Common myeloid progenitor, CD34-positive (primary cell): ENCODE measurements at regions of chr21 and their contacts with region 1.

Region 1: DNA sequence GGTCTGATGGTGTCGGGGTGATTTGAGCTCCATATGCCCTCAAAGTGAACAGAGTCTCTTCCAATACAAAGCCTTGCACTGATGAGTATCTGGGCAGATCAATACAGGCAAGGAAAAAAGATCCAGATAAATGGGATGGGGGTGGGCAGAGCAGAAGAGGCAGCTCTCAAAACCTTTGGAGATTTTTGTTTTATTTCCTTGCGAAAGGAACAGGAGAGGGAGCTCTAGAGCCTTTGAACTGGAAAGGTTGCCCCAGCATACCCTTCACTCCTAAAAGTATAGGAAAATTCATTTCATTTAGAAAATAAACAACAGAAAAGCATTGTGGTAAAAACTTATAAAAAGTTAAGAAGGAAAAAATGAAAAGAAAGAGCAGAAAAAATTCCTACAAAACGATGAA is 31.4 kb upstream of the OLIG2 start:
- DNase-seq: peak; percentile 17 to 43 (median 28)
- H3K4me3 ChIP-seq: no peak overlapping the region
- H3K27ac ChIP-seq: no peak overlapping the region
- H3K4me1 ChIP-seq: no peaks in the 10 kb centered on the region
- H3K27me3 ChIP-seq: peaks cover 0 to 22% (median 6%) of the 10 kb centered on the region in 5 experiments

Region 2: DNA sequence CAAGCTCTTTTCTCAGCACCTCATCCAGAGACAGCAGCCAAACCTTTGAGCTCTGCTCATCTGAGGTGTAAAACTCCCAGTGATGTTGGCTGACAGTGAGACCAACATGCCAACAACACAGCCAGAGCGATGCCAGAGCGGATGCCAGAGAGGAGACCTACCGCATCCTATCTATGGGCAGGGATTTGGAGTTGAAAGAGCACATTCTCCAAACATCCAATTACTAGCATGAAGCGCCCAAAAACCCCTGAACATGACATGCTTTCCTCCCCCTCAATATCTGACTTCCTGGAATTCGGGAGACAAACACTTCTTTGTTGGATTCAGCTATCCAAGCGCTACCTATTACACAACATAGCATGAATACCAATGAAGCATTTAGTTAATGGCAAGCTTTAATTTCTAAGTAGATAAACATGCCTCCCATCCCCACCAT is 199.6 kb before region 1 on chr21:
- CTCF ChIA-PET with region 1: no interaction called
- POLR2A ChIA-PET with region 1: no interaction called
- DNase-seq: no peak
- H3K4me3 ChIP-seq: no peak overlapping the region
- H3K27ac ChIP-seq: no peak overlapping the region
- H3K4me1 ChIP-seq: peaks cover 0 to 4% (median 0%) of the 10 kb centered on the region in 4 experiments
- H3K27me3 ChIP-seq: no peaks in the 10 kb centered on the region

Region 3: DNA sequence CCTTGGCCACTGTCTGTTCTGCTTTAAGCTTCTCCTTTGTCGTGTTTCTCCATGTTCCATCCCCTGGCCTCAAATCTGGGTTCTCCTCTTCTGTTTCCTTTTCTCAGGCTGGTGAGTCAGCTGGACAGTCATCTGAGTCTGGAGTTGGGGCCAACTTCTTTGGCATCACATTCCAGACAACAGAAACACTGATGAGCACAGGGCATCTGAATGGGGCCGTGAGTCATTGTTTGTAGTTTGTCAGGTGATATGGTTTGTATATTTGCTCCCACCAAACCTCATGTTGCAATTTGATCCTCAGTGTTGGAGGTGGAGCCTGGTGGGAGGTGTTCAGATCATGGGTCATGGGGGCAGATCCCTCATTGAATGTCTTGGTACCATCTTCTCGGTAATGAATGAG is 17.2 kb after region 1 on chr21:
- CTCF ChIA-PET with region 1: interaction called, 10 read pairs
- POLR2A ChIA-PET with region 1: no interaction called
- DNase-seq: no peak
- H3K4me3 ChIP-seq: no peak overlapping the region
- H3K27ac ChIP-seq: no peak overlapping the region
- H3K4me1 ChIP-seq: no peaks in the 10 kb centered on the region
- H3K27me3 ChIP-seq: peaks cover 2 to 25% (median 17%) of the 10 kb centered on the region in 5 experiments

Region 4: DNA sequence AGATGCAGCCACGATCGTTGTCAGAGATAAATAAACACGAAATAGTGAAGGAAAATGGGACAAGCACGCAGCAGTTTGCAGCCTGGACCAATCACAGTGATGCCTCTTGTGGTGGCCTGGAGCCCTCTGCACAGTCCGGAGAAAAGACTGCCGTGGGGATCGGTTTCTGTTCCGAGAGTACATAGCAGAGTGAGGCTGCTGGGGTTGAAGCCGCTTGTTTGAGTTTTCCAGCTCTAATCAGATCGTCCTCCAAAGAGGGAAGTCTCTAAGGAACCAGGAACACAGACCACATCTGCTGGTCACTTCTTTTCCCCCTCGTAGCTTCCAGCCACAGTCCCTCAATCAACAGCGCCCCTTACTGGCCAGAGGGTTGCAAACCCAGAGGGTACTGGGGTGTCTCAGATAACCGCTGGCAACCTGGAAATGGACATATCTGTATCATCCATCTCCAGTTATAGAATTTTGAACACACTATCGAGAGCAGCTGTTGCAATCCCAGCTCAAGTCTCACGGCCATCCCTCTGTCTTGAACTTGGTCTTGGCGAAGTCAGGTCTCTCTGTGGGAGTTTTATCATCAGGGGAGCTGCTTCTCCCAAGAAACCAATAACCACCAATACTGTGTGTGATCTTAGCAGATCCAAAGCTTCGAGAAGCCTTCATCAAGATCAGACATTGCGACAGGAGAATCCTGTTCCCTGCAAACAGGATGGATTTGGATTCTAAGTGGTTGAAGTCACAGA is 133.0 kb after region 1 on chr21:
- CTCF ChIA-PET with region 1: interaction called, 54 read pairs
- POLR2A ChIA-PET with region 1: no interaction called
- DNase-seq: peak; percentile 62 to 73 (median 67)
- H3K4me3 ChIP-seq: peak overlapping the region in 6 of 7 experiments; percentile 48 to 84 (median 62)
- H3K27ac ChIP-seq: no peak overlapping the region
- H3K4me1 ChIP-seq: peaks cover 0 to 14% (median 8%) of the 10 kb centered on the region in 4 experiments
- H3K27me3 ChIP-seq: peaks cover 0 to 17% (median 7%) of the 10 kb centered on the region in 5 experiments